Naive thymus-derived CD8-positive, alpha-beta T cell (primary cell): ENCODE measurements at regions of chr9 and their contacts with region 1.

Region 1: DNA sequence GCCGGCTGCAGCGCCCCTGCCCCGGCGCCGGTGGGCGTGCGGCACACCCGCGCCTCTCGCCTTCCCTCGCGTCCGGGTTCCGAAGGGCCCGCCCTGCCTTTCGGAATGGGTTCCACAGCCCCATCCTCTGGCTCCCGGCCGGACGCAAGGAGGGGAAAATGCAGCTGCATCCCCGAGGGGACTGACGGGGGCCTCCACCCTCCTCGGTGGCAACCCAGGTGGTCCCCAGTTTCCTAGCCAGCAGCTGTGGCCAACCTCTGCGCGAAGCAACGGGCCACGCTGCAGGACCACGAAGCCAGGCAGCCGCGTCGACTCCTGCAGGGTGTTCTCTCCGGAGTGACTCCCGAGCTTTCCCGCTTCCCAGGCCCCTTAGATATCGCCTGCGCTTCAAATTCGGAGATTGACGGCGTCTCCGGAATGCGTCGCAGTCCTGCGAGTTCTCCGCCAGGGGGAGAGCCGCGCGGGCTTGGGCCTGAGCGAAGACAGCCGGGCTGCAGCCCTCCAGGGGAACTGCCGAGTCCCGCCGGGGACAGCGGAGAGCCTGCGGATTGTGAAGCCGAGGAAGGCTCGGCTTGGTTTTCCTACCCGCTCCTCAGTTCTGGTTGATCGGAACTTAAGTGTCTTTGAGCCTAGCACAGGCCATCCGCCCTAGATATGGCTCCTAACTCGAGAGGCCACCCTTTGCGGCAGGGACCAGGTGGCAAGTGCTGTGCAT is 582 bp upstream of the APBA1 start:
- DNase-seq: peak; percentile 57 to 80 (median 65)
- ATAC-seq: peak; percentile 86
- H3K4me3 Mint-ChIP-seq: peak overlapping the region; percentile 80 to 91 (median 85)
- H3K27ac Mint-ChIP-seq: peak overlapping the region in 7 of 10 donors; percentile 2 to 75 (median 11)
- H3K4me1 Mint-ChIP-seq: peaks cover 5 to 22% (median 14%) of the 10 kb centered on the region in 4 donors
- H3K27me3 Mint-ChIP-seq: peaks cover 0 to 21% (median 4%) of the 10 kb centered on the region in 5 donors

Region 2: GRCh38 chr9:69657269-69657668 is 15.5 kb before region 1 on chr9:
- POLR2A ChIA-PET with region 1: no interaction called
- DNase-seq: no peak
- ATAC-seq: no peak
- H3K4me3 Mint-ChIP-seq: no peak overlapping the region
- H3K27ac Mint-ChIP-seq: no peak overlapping the region
- H3K4me1 Mint-ChIP-seq: no peaks in the 10 kb centered on the region
- H3K27me3 Mint-ChIP-seq: peaks cover 5 to 17% (median 11%) of the 10 kb centered on the region in 5 donors

Region 3: DNA sequence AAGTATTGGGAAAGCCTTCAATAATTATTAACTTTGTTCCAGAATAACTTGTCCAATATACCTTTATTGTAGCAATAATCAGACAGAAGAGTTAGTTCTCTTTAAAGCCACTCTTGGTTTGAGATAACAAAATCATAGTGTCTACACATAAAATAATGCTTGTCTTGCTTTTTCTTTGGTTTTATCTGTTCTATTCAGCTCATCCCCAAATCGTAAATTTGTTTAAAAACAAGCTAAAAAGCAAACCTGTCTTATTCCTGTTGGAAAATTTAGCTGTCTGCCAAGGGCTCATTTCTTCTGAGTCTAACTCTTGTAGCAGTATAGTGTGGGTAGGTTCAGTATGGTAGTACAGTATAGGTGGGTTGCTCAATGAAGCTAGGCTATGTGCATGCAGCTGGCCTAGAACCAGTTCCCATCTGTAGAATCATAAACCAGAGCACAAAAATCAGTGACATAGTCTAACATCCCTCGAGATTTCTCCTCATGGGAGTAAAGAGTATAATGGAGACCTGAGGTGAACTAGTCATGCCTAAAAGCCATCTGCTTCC is 17.3 kb after region 1 on chr9:
- POLR2A ChIA-PET with region 1: no interaction called
- DNase-seq: no peak
- ATAC-seq: no peak
- H3K4me3 Mint-ChIP-seq: no peak overlapping the region
- H3K27ac Mint-ChIP-seq: no peak overlapping the region
- H3K4me1 Mint-ChIP-seq: no peaks in the 10 kb centered on the region
- H3K27me3 Mint-ChIP-seq: peaks cover 0 to 5% (median 3%) of the 10 kb centered on the region in 5 donors

Region 4: DNA sequence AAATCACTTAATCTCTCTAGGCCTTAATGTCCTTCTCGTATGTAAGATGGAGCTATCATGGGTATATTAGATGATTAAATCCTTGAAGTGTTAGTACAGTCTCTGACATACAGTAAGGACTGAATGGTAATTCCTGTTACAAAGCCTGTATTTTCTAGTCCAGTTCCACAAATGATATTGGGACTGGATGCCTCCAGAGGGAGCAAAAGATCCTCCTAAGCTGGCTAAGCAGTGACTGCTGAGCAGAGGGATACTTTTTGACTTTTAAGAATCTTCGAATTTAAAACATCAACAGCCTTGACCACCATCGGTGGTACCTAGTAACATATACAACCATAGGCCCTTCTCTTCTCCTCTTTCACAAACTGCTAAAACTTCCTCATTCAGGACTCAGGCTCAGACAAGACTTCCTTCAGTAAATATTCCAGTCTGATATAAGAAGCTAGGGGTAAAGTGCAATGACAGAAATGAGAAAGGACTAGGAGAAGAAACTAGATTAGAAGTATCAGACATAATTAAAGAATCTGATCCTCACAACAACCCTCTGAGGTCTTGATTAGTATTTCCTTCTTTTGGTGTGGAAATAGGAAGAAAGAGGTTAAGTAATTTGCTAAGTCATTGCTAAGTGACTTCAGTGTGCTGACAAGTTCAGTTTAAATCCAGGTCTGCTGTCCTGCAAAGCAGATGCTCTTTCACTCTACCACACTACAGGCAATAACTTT is 73.1 kb after region 1 on chr9:
- POLR2A ChIA-PET with region 1: no interaction called
- DNase-seq: no peak
- ATAC-seq: no peak
- H3K4me3 Mint-ChIP-seq: peak overlapping the region in 1 of 10 donors; percentile 30
- H3K27ac Mint-ChIP-seq: peak overlapping the region in 4 of 10 donors; percentile 0 to 19 (median 15)
- H3K4me1 Mint-ChIP-seq: peaks cover 22 to 58% (median 54%) of the 10 kb centered on the region in 4 donors
- H3K27me3 Mint-ChIP-seq: no peaks in the 10 kb centered on the region

Region 5: GRCh38 chr9:69759421-69760277 is 86.9 kb after region 1 on chr9 and contains the start of gene PTAR1:
- POLR2A ChIA-PET with region 1: interaction called, 15 read pairs
- DNase-seq: peak; percentile 80 to 92 (median 88)
- ATAC-seq: peak; percentile 83 to 87
- H3K4me3 Mint-ChIP-seq: peak within 1 kb of the TSS; percentile 91 to 99 (median 95)
- H3K27ac Mint-ChIP-seq: peak within 1 kb of the TSS; percentile 88 to 98 (median 96)
- H3K4me1 Mint-ChIP-seq: peaks cover 15 to 35% (median 33%) of the 10 kb centered on the region in 4 donors
- H3K27me3 Mint-ChIP-seq: no peaks in the 10 kb centered on the region
- polyA plus RNA-seq, gene PTAR1: 8.1 to 14.0 (median 13.1) TPM